Pancreas (tissue), 10 donors: ENCODE measurements at regions of chr18 and their contacts with region 1.

Region 1: GRCh38 chr18:24827501-24827900 is 367.1 kb downstream of the HRH4 start:
- DNase-seq: no peak
- ATAC-seq: no peak
- H3K4me3 ChIP-seq: no peak overlapping the region
- H3K27ac ChIP-seq: no peak overlapping the region
- H3K4me1 ChIP-seq: no peaks in the 10 kb centered on the region
- H3K27me3 ChIP-seq: no peaks in the 10 kb centered on the region
- CTCF ChIP-seq: no peak

Region 2: DNA sequence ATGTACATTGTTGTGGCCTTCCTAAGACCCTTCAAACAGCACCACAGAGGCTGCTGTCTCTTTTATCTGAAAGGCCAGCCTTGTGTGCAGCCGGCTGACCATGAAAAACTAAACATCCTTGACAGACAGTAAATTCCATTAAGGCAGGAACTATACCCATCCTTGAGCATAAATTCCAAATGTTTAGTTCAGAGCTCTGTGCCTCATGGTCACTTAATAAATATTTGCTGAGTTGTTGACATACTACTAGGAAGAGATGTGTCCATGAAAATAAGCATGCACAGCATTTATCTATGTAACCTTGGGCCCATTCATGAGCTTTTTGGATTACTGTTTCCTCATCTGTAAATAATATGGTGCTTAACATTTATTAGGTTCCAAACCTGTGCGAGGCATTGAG is 57.8 kb after region 1 on chr18:
- intact Hi-C with region 1: loop called in 1 of 3 experiments (anchors 10 kb)
- DNase-seq: no peak
- ATAC-seq: no peak
- H3K4me3 ChIP-seq: no peak overlapping the region
- H3K27ac ChIP-seq: no peak overlapping the region
- H3K4me1 ChIP-seq: no peaks in the 10 kb centered on the region
- H3K27me3 ChIP-seq: no peaks in the 10 kb centered on the region
- CTCF ChIP-seq: no peak